PC-9 (cell line): ENCODE measurements at regions of chrX and their contacts with region 1.

Region 1: DNA sequence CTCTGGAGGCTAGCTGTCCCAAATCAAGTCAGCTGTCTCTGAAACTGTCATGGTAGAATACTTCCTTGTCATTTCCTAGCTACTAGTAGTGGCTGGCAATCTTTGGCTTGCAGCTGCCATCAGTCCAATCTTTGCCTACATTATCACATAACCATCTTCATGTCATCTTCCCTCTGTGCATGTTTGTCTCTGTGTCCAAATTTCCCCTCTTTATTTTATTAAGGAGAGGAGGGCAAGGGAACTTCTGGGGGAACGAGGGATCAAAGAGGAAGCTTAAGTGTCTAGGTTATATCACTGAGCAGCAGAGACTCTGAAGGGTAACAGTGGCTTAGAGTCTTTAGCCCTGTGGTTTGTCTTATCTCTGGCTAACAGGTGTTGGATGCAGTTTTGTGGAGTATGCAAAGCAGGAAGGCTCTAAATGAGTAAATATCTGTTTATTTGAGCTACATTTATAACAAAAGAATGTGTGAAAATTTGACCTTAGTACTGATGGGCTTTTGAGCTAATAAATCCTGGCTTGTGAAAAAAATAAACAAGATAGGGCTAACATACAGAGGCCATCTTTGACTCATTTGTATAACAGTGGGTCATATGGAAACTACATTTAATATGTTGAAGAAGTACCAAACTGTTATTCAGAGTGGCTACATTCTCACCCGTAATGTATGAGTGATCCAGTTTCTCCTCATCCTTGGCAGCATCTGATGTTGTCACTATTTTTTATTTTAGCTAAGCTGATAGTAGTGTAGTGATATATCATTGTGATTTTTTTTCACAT is 49.4 kb upstream of the ENOX2 start:
- DNase-seq: no peak
- H3K4me3 ChIP-seq: no peak overlapping the region
- H3K27ac ChIP-seq: no peak overlapping the region
- H3K4me1 ChIP-seq: no peaks in the 10 kb centered on the region
- H3K27me3 ChIP-seq: peaks cover 28% of the 10 kb centered on the region
- CTCF ChIP-seq: no peak

Region 2: DNA sequence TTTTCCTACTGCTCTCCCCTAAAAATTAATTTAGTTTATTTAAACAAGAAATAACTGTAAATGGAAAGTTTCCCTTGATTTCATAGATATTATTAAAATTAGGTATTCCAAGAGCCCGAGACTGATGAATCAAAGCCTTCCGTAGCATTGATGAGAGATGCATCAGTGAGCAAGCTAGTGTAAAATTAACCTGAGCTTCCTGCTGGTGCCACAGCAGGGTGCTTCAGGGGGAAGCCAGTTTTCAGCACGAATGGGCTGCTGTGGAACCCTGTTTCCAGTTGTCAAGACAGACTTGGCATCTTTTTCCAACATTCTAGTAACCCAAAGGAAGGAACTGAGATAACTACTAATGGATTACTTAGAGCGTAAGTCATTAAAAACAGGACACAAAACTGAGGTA is 328.9 kb before region 1 on chrX:
- CTCF ChIA-PET with region 1: interaction called, 12 read pairs
- POLR2A ChIA-PET with region 1: no interaction called
- intact Hi-C with region 1: no loop called
- DNase-seq: no peak
- H3K4me3 ChIP-seq: no peak overlapping the region
- H3K27ac ChIP-seq: no peak overlapping the region
- H3K4me1 ChIP-seq: no peaks in the 10 kb centered on the region
- H3K27me3 ChIP-seq: no peaks in the 10 kb centered on the region
- CTCF ChIP-seq: no peak